WTC11 (cell line): ENCODE measurements at regions of chr12 and their contacts with region 1.

Region 1: DNA sequence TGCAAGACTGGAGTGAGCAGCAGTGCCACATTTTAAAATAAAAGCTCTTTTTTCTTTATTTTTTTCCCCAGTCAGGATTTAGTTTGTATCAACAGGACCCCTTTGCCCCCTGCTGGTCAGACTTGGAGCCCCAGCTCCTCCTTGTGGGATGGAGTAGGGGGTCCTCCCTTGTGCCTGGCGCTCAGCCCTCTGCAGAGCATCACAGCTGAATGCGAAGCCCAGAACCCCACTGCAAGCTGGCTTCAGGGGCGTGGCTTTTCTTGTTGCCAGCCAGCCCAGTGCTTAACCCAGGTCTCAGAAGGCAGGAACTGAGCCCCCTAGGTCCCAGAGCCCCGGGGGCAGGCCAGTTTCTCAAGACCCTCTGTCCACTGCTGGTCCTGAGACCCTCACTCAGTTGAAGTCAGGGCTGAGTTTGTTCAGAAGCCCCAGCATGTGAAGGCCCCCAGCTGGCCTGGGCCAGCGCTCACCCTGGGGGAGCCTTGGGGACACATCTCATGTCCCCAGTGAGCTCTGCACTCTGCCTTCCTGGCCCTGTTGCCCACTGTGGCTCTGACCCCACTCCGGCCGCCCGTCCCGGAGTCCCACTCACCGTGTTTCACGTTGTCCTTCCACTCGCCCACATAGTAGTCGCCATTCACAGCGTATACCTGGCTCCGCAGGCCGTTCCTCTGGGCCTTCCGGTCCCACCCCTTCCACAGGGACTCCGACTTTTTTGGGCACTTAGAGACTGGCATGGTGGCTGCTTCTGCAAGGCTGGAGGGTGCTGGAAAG is 519 bp downstream of the MORN3 start:
- DNase-seq: peak; percentile 83
- ATAC-seq: peak; percentile 38
- H3K4me3 Mint-ChIP-seq: no peak overlapping the region
- H3K27ac Mint-ChIP-seq: peak overlapping the region; percentile 53; the same call in 1 of the 2 replicates
- H3K4me1 Mint-ChIP-seq: peaks cover 34% of the 10 kb centered on the region
- H3K27me3 Mint-ChIP-seq: no peaks in the 10 kb centered on the region; the same call in 1 of the 2 replicates
- CTCF ChIP-seq: no peak

Region 2: DNA sequence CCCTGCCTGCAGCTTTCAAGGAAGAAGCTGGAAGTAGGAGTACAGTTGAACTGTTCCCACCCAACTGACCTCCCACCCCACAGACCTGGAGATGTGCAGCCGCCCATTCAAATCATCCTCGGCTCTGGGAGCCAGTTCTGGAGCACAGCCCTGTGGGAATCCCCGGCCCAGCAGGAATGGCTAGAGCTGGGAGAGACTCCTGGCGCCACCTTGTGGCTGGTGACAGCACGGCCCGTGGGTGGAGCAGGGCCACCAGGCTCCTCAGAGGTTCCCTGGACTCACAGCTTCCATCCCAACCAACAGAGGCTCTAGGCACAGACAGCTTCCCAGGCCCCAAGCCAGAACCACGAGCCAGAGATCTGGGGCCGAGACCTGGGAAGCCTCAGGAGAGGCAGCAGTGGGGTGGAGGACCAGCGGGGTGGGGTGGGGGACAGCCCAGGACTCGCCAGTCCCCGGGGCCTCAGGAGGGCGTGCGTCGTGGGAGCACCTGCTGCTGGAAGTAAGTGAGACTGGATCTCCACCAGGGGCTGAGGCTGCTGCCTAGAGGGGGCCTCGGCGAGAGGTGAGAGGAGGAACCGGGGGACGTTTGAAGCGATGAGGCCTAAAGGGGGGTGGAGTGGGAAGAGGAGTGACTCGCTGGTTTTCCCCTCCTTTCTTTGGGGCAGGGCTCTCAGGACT is 225.6 kb before region 1 on chr12:
- CTCF ChIA-PET with region 1: interaction called, 10 read pairs
- POLR2A ChIA-PET with region 1: no interaction called
- DNase-seq: peak; percentile 94
- ATAC-seq: peak; percentile 91
- H3K4me3 Mint-ChIP-seq: no peak overlapping the region
- H3K27ac Mint-ChIP-seq: peak overlapping the region; percentile 85
- H3K4me1 Mint-ChIP-seq: peaks cover 7% of the 10 kb centered on the region
- H3K27me3 Mint-ChIP-seq: no peaks in the 10 kb centered on the region; the same call in 1 of the 2 replicates
- CTCF ChIP-seq: peak; percentile 83

Region 3: DNA sequence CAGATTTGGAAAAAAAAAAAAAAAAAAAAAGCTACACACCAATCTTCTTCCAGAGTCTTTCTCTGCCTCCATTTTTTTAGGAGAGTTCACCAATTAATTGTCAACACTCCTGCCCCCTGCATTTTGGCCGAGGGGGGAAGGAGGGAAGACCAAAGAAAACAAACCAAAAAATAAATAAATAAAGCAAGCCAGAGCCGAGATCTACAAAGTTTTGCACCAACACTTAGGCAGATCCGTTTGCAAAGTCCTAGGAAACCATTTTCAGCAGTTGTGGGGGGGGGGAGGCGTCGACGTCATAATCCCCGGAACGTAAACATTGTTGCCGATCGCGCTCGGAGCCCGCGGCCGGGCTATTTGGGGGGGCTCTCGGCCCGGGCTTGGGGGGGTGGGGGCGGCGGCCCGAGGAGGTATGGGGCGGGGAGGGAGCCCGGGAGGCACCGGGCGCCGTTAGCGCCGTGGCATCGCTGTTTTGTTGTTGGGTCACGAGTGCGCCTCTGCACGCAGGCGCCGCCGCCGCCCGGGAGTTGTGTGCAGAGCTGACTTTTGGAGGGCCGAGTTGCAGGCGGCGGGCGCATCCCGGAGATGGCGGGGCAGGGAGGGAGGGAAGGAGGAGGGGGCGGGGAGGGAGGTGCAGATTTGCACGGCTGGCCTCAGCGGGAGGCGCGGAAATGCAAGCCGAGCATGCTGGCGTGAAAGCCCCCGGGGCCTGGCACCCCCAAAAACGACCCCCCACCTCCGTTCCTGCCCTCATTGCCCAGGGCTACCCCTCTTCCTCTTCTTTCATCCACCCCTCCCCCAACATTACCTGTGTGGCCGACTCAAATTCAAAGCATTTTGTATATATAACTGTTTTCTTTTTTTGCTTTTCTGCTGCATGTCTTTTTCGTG is 88.7 kb before region 1 on chr12:
- CTCF ChIA-PET with region 1: interaction called, 19 read pairs
- POLR2A ChIA-PET with region 1: interaction called, 6 read pairs
- DNase-seq: peak; percentile 81
- ATAC-seq: peak; percentile 7; the same call in 1 of the 2 replicates
- H3K4me3 Mint-ChIP-seq: peak overlapping the region; percentile 99
- H3K27ac Mint-ChIP-seq: peak overlapping the region; percentile 100
- H3K4me1 Mint-ChIP-seq: peaks cover 46% of the 10 kb centered on the region
- H3K27me3 Mint-ChIP-seq: no peaks in the 10 kb centered on the region
- CTCF ChIP-seq: no peak

Region 4: GRCh38 chr12:121637231-121637914 is 31.6 kb before region 1 on chr12:
- CTCF ChIA-PET with region 1: interaction called, 10 read pairs
- POLR2A ChIA-PET with region 1: interaction called, 4 read pairs
- DNase-seq: no peak
- ATAC-seq: peak; percentile 16; the same call in 1 of the 2 replicates
- H3K4me3 Mint-ChIP-seq: no peak overlapping the region
- H3K27ac Mint-ChIP-seq: peak overlapping the region; percentile 60; the same call in 1 of the 2 replicates
- H3K4me1 Mint-ChIP-seq: peaks cover 29% of the 10 kb centered on the region
- H3K27me3 Mint-ChIP-seq: no peaks in the 10 kb centered on the region
- CTCF ChIP-seq: no peak

Region 5: GRCh38 chr12:121657305-121658008 is 11.5 kb before region 1 on chr12:
- CTCF ChIA-PET with region 1: interaction called, 17 read pairs
- POLR2A ChIA-PET with region 1: no interaction called
- DNase-seq: no peak
- ATAC-seq: no peak
- H3K4me3 Mint-ChIP-seq: no peak overlapping the region
- H3K27ac Mint-ChIP-seq: peak overlapping the region; percentile 26
- H3K4me1 Mint-ChIP-seq: peaks cover 29% of the 10 kb centered on the region
- H3K27me3 Mint-ChIP-seq: no peaks in the 10 kb centered on the region; the same call in 1 of the 2 replicates
- CTCF ChIP-seq: no peak